Activated naive CD4-positive, alpha-beta T cell treated with anti-CD3 and anti-CD28 coated beads for 36 hours (primary cell): ENCODE measurements at regions of chr7 and their contacts with region 1.

Region 1: DNA sequence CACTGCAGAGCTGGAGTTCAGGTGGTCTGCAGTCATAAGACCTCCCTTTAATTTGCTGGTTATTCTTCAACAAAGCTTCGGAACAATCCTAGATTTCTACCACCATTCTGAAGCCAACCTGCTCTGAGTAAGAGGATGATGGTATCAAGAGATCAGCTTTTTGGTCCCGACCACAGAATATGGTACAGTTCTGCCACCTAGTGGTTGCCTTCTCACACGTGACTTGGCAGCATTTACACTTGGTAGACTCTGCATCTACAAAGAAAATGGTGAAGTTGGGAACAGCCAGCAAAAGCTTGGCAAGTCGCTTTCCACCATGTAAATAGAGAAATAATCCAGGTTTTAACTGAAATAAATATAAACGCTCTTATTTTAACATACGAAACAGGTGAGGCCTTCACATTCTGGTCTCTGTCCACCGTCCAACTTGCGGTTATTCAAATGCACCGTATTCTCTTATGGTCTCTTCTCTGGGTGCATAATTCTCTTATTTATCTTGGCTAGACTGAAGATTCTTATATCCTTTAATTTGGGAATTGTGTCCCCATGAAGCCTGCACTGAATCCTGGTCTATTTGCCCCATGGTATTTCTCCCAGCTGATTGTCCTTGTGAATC is 173.9 kb upstream of the GRM3 start:
- DNase-seq: peak; percentile 78
- H3K4me3 Mint-ChIP-seq: no peak overlapping the region
- H3K27ac Mint-ChIP-seq: no peak overlapping the region
- H3K4me1 Mint-ChIP-seq: no peaks in the 10 kb centered on the region
- H3K27me3 Mint-ChIP-seq: no peaks in the 10 kb centered on the region

Region 2: GRCh38 chr7:85030893-85031292 is 1438.9 kb before region 1 on chr7:
- CTCF ChIA-PET with region 1: no interaction called
- intact Hi-C with region 1: loop called (anchors 1 kb)
- DNase-seq: no peak
- H3K4me3 Mint-ChIP-seq: no peak overlapping the region
- H3K27ac Mint-ChIP-seq: no peak overlapping the region
- H3K4me1 Mint-ChIP-seq: no peaks in the 10 kb centered on the region
- H3K27me3 Mint-ChIP-seq: peaks cover 5% of the 10 kb centered on the region

Region 3: DNA sequence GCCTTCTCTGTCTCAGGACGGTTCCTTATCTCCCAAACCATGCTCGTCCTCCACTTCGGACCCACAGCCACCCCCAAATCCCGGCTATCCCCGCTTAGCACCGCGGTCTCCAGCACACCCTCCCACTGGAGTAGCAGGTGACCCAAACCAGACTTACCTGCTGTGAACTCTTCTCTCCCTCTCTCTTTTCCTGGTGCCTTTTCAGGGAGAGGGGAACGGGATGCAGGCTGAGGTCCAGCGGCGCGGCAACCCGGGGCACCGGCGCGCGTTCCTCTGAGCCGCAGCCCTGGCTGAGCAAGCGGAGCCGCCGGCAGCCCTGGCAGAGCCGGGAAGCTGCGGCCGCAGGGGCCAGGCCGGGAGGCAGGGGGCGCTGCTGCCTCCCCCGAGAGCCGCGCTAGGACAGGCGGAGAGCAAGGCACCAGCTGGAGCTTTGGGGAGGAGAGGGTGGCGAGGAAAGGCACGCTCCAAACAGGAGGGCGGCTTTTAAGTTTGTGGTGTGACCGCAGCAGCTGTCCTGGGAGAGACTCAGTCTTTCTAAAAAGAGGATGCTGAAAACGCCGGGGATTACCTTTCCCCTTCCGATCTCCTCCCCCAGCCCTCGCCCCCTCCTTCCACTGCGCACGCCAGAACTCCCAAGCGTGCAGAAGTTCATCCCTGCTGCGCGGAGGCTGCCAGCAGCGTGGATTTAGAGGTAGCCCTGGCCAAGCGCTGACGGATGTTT is 1283.1 kb before region 1 on chr7 and contains the start of gene SEMA3D:
- CTCF ChIA-PET with region 1: no interaction called
- intact Hi-C with region 1: loop called (anchors 5 kb)
- DNase-seq: peak; percentile 34
- H3K4me3 Mint-ChIP-seq: peak within 1 kb of the TSS; percentile 12
- H3K27ac Mint-ChIP-seq: no peak within 1 kb of the TSS
- H3K4me1 Mint-ChIP-seq: peaks cover 4% of the 10 kb centered on the region
- H3K27me3 Mint-ChIP-seq: peaks cover 46% of the 10 kb centered on the region
- total RNA-seq, gene SEMA3D: not detected

Region 4: DNA sequence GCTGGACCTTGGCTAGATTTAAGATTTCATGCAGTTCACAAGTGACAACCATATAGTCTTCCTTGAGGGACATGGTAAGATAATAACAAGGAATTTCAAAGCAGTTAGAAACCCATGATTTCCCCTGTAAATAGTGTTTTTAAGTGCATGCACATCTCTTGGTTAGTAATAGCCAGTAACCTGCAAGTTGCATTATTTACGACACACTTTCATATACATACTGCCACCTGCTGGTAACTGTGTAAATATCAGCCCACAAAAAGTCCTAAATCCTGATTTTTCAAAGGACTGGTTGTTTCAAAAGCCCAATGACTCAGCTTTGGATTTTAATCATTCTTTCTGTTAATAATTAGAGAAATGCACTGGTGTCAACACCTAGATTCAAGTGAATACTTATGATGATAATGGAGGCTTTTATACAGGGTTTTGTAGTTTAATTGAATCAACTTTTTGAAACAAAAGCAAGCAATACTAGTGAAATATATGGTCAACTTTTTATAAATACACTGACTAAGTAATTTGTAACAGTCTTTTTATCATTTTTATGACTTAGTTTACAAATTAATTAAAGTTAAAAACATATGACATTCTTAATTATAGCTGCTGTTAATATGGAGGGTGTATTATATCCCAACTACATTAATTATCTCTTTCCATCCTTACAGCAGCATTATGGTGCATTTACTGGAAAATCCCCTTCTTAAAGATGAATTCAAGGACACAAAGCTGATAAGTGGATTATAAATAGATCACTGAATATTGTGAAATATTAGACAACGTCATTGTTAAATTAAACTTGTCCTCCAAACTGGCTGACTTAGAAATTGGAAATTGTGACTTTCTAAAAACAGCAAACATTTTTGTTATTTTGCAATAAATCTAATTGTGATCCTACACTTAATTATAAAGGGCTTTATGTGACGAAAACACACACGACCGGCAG is 915.3 kb before region 1 on chr7:
- CTCF ChIA-PET with region 1: no interaction called
- intact Hi-C with region 1: loop called (anchors 10 kb)
- DNase-seq: peak; percentile 8
- H3K4me3 Mint-ChIP-seq: no peak overlapping the region
- H3K27ac Mint-ChIP-seq: no peak overlapping the region
- H3K4me1 Mint-ChIP-seq: no peaks in the 10 kb centered on the region
- H3K27me3 Mint-ChIP-seq: no peaks in the 10 kb centered on the region

Region 5: DNA sequence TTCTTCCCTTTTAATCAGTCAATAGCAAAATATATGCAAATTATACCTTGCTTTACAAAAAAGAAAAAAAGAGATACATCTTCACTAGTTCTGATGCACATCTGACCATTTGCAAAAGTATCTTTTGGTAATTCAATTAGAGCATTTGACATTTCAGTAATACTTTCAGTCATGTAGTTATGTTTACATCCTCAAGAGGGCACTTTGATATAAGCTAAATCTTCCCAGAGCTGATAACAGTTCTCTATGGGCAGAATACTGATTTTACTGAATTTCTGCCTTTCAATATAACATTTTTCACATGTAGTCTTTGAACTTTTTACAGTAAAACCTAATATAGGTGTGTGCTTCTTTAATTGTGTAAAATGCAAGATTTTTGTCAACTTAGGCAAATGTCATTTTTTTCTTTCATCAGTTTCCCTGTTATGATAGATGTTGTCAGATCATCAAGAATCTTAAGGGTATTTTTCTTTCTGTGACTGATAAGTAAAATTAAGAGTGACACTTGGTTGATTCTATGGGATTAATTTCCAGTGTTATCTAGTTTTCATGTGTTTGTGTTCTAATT is 579.5 kb before region 1 on chr7:
- CTCF ChIA-PET with region 1: interaction called, 8 read pairs
- intact Hi-C with region 1: loop called (anchors 1 kb)
- DNase-seq: no peak
- H3K4me3 Mint-ChIP-seq: no peak overlapping the region
- H3K27ac Mint-ChIP-seq: no peak overlapping the region
- H3K4me1 Mint-ChIP-seq: no peaks in the 10 kb centered on the region
- H3K27me3 Mint-ChIP-seq: no peaks in the 10 kb centered on the region

Region 6: DNA sequence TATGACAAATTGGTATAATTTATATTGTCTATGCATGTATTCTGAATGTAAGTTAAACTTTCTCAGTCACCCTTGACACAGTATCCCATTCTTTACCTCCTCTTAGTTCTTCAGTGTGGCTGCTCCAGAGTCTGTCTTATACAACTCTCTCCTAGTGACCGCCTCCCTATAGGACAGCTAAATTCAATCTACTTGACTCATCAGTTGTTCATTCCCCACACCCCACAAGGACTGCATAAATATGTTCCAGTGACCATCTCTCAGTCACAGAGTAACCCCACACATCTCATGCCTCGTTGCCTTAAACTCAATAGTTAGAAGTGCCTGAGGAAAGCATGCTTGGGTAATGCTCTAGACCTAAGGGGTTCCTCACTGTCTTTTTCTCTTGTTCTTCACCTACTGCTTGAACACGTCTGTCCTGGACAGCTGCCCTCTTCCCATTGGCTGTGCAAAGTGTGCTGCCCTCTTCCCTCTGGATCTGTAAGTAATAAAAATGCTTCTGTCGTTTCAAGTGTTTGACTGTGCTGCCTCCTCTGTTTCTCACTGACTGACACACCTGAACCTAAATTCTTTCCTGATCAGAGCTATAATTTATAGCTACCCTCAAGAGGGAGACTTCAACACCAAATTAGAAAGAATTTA is 320.6 kb before region 1 on chr7:
- CTCF ChIA-PET with region 1: no interaction called
- intact Hi-C with region 1: loop called (anchors 10 kb)
- DNase-seq: no peak
- H3K4me3 Mint-ChIP-seq: no peak overlapping the region
- H3K27ac Mint-ChIP-seq: no peak overlapping the region
- H3K4me1 Mint-ChIP-seq: no peaks in the 10 kb centered on the region
- H3K27me3 Mint-ChIP-seq: no peaks in the 10 kb centered on the region

Region 7: DNA sequence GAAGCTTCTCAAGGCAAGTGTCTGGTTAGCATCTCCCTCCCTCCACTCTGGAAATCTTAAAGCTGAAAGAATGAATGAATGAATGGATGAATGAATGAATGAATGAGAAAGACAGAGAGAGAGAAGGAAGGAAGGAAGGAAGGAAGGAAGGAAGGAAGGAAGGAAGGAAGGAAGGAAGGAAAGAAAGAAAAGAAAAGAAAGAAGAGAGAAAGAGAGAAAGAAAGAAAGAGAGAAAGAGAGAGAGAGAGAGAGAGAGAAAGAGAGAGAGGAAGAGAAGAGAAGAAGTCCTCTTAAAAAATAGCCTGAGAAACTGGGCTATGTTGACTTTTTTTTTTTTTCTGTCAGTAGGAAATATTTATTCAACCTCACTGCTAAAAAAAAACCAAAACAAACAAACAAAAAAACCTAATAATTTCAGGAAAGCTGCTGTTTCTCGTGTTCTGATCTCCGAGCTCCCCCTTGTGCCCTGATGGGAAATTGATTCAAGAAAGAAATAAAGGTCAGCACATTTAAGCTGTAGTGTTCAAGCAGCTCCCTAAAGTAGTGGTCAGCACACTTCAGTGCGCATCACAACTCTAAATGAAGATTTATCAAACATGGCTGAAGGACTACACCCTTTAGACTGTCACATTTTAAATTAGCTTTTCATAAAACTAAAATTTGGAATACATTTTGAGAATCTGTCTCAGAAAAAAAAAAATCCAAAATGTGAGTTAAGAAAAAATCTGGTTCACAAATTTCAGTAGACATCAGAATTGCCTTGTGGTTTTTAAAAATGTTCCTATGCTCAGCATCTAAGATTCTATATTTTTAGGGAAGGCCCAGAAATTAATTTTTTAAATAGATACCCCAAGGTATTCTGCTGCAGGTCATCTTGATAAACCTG is 435.4 kb after region 1 on chr7:
- CTCF ChIA-PET with region 1: interaction called, 4 read pairs
- intact Hi-C with region 1: loop called (anchors 10 kb)
- DNase-seq: peak; percentile 23
- H3K4me3 Mint-ChIP-seq: no peak overlapping the region
- H3K27ac Mint-ChIP-seq: no peak overlapping the region
- H3K4me1 Mint-ChIP-seq: no peaks in the 10 kb centered on the region
- H3K27me3 Mint-ChIP-seq: peaks cover 3% of the 10 kb centered on the region